ENCODE measurements at regions of chr2 and their contacts with region 1.

Region 1: GRCh38 chr2:62760555-62760954 is 55.0 kb downstream of the EHBP1 start:
- DNase-seq: peak; percentile 38
- ATAC-seq: peak; percentile 73
- H3K4me3 ChIP-seq: no peak overlapping the region
- H3K27ac ChIP-seq: no peak overlapping the region
- H3K4me1 ChIP-seq: peaks cover 5% of the 10 kb centered on the region; the same call in 1 of the 2 replicates
- H3K27me3 ChIP-seq: no peaks in the 10 kb centered on the region
- CTCF ChIP-seq: no peak

Region 2: DNA sequence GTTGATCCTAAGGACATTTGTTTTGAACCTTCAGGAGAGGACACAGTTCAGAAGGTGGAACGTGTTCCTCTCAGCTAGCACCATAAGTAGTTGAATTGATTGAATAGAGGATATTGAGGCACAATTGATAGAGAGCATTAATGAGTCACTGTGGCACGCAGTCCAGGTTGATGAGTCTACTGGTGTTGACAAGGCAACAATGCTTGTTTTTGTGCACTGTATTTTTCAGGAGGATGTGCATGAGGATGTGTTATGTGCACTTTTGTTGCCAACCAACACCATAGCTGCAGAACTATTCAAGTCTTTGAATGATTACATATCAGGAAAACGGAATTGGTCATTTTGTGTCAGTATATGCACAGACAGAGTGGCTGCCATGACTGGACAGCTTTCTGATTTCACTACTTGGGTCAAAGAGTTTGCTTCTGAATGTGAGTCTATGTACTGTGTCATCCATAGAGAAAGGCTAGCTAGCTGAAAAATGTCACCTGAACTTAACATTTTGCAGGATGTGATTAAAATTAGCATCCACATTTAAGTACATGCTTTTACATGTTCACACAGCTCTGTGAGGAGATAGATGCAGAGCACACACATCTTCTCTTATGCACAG is 704.7 kb before region 1 on chr2:
- CTCF ChIA-PET with region 1: no interaction called
- POLR2A ChIA-PET with region 1: no interaction called
- intact Hi-C with region 1: no loop called
- DNase-seq: no peak
- ATAC-seq: no peak
- H3K4me3 ChIP-seq: no peak overlapping the region
- H3K27ac ChIP-seq: no peak overlapping the region
- H3K4me1 ChIP-seq: no peaks in the 10 kb centered on the region
- H3K27me3 ChIP-seq: no peaks in the 10 kb centered on the region
- CTCF ChIP-seq: no peak

Region 3: GRCh38 chr2:62505750-62506420 is 254.7 kb before region 1 on chr2 and contains the start of gene TMEM17:
- CTCF ChIA-PET with region 1: no interaction called
- POLR2A ChIA-PET with region 1: interaction called, 18 read pairs
- intact Hi-C with region 1: no loop called
- DNase-seq: peak; percentile 94
- ATAC-seq: peak; percentile 90
- H3K4me3 ChIP-seq: peak within 1 kb of the TSS; percentile 77
- H3K27ac ChIP-seq: peak within 1 kb of the TSS; percentile 72
- H3K4me1 ChIP-seq: peaks cover 7% of the 10 kb centered on the region; the same call in 1 of the 2 replicates
- H3K27me3 ChIP-seq: no peaks in the 10 kb centered on the region
- CTCF ChIP-seq: no peak
- total RNA-seq, gene TMEM17: 1.6 and 2.9 TPM in 2 replicates

Region 4: GRCh38 chr2:62669180-62669579 is 91.4 kb before region 1 on chr2:
- CTCF ChIA-PET with region 1: interaction called, 13 read pairs
- POLR2A ChIA-PET with region 1: no interaction called
- intact Hi-C with region 1: no loop called
- DNase-seq: no peak
- ATAC-seq: no peak
- H3K4me3 ChIP-seq: no peak overlapping the region
- H3K27ac ChIP-seq: no peak overlapping the region
- H3K4me1 ChIP-seq: peaks cover 6% of the 10 kb centered on the region; the same call in 1 of the 2 replicates
- H3K27me3 ChIP-seq: no peaks in the 10 kb centered on the region
- CTCF ChIP-seq: no peak